Tibial artery (tissue), 4 donors: ENCODE measurements at regions of chr13 and their contacts with region 1.

Region 1: DNA sequence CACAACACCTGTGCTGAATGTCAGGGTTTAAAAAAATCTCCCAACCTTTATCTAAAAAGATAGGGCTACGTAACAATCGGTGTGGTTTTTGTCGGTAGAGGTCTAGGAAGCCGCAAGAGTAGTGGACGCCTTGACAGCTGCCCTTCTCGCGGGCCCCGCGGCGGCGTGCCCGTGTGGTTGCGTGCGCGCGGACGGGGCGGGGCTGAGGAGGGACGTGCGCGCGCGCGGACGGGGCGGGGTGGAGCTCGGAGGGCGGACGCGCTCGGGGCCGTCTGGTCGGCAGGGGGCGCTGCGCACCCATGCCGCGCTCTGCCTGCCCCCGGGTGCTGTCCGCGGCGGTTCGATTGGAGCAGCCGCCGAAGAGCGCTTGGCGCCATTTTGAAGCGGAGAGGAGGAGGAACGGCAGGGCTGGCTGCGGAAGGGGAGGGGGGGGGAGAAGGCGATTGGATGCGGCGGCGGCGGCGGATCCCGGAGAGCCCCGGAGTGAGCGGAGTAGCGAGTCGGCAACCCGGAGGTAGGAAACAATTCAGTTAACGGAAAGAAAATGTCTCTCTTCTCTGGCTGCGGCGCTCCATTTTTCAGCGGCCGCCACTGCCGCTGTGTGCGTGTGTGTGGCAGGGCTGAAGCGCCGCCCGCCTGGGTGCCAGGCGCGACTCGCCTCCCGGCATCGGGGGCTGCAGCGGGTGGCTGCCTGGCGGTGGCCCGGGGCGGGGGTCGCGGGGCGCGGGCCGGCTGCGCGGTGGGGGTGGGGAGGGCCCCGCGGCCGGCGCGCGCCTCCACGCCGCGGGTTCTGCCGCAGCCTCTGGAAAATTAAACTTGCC is at the start of gene PDS5B:
- DNase-seq: peak; percentile 94 to 98
- H3K4me3 ChIP-seq: peak within 1 kb of the TSS; percentile 71 to 88
- H3K27ac ChIP-seq: peak within 1 kb of the TSS; percentile 90 to 92
- H3K4me1 ChIP-seq: peaks cover 0 to 36% (median 12%) of the 10 kb centered on the region in 4 donors
- H3K27me3 ChIP-seq: no peaks in the 10 kb centered on the region
- CTCF ChIP-seq: peak; percentile 91 to 98

Region 2: DNA sequence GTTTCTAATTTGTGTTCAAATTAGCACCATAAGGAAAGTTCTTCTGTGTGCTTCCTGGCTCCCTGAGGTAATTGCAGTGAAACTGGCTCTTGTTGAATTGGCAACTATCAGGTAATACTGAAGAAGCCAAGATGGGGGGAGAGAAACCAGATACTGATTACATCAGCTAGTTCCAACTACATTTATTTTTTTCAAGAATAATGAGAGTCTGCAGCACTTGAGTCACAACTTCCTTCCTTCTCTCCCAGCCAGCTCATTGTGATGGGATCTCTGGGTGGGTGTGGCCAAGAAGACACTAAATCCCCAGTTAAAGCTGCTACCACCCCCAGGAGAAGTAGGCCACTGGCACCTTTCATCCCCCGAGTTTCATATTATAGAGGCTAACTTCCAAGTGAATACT is 947.7 kb before region 1 on chr13:
- intact Hi-C with region 1: no loop called
- DNase-seq: no peak
- H3K4me3 ChIP-seq: no peak overlapping the region
- H3K27ac ChIP-seq: no peak overlapping the region
- H3K4me1 ChIP-seq: no peaks in the 10 kb centered on the region
- H3K27me3 ChIP-seq: peaks cover 0 to 2% of the 10 kb centered on the region in 2 donors
- CTCF ChIP-seq: no peak

Region 3: GRCh38 chr13:32453981-32454380 is 132.3 kb before region 1 on chr13:
- intact Hi-C with region 1: no loop called
- DNase-seq: no peak
- H3K4me3 ChIP-seq: no peak overlapping the region
- H3K27ac ChIP-seq: no peak overlapping the region
- H3K4me1 ChIP-seq: no peaks in the 10 kb centered on the region
- H3K27me3 ChIP-seq: no peaks in the 10 kb centered on the region
- CTCF ChIP-seq: no peak

Region 4: DNA sequence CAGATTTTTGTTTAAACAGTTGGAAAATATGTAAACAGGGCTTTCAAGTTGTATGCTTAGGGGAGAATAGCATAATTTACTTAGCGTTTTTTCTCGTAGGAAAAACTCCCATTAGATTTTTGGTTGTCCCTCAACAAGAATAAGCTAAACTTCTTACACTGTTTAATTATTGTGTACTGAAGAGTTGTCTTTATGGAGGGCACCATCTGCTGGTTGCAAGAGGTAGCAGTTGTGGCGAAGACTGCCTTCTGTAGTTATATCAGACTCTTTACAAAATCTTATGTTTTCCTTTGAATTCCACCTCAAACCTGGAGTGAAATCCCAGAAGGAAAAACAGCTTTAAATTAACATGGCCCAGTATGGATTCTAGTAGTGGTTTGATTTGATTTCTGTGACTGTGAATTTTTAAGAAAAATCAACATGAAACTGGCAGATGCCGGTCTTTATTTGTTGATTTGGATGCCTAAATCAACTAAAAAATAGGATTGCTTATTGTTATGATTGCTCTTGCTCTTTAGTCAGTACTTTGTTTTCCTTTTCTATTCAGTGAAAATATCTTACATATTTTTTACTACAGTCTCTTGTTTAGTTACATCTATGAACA is 53.3 kb after region 1 on chr13:
- intact Hi-C with region 1: loop called (anchors 5 kb)
- DNase-seq: peak; percentile 65 to 72
- H3K4me3 ChIP-seq: no peak overlapping the region
- H3K27ac ChIP-seq: no peak overlapping the region
- H3K4me1 ChIP-seq: no peaks in the 10 kb centered on the region
- H3K27me3 ChIP-seq: no peaks in the 10 kb centered on the region
- CTCF ChIP-seq: peak; percentile 76 to 87

Region 5: GRCh38 chr13:32863596-32863995 is 277.3 kb after region 1 on chr13:
- intact Hi-C with region 1: no loop called
- DNase-seq: no peak
- H3K4me3 ChIP-seq: no peak overlapping the region
- H3K27ac ChIP-seq: no peak overlapping the region
- H3K4me1 ChIP-seq: no peaks in the 10 kb centered on the region
- H3K27me3 ChIP-seq: no peaks in the 10 kb centered on the region
- CTCF ChIP-seq: no peak

Region 6: GRCh38 chr13:33723772-33724435 is 1137.6 kb after region 1 on chr13:
- intact Hi-C with region 1: loop called (anchors 10 kb)
- DNase-seq: peak; percentile 82 to 84
- H3K4me3 ChIP-seq: no peak overlapping the region
- H3K27ac ChIP-seq: peak overlapping the region; percentile 47 to 62
- H3K4me1 ChIP-seq: peaks cover 0 to 25% (median 15%) of the 10 kb centered on the region in 4 donors
- H3K27me3 ChIP-seq: no peaks in the 10 kb centered on the region
- CTCF ChIP-seq: peak; percentile 64 to 70